HepG2 (cell line): ENCODE measurements at regions of chr6 and their contacts with region 1.

Region 1: DNA sequence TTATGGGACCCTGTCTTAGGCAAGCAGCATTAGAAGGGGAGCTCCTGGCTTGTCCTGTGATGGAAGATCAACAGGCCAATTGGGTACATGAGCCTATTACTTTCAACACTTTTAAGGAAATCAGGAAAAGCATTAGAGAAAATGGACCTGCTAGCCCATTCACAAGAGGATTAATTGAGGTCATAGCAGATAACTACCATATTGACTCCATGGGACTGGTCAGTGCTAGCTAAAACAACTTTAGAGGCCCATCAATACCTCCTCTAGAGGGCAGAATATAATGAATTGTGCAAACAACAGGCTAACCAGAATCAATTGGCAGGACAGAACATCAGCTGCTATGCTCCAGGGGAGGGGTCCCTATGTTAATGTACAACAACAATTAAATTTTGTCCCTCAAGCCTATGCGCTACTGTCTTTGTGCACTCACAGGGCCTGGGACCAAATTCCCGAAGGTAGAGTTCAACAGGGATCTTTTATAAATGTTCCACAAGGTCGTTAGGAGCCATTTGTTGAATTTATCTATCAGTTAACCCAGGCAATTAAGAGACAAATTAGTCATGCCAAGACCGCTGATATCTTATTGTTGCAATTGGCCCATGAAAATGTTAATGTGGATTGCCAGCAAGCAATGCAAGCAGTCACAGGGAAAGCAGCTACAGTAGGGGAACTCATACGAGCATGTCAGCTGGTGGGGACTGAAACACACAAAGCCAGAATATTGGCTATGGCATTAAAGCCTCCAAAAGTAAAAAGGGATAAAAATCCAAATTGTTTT is 106.6 kb upstream of the BTN3A2 start:
- DNase-seq: peak; percentile 47
- ATAC-seq: peak; percentile 55
- H3K4me3 ChIP-seq: peak overlapping the region; percentile 26 to 54 (median 43); a peak in 4 of 6 replicates
- H3K27ac ChIP-seq: peak overlapping the region; percentile 46
- H3K4me1 ChIP-seq: peaks cover 69% of the 10 kb centered on the region
- H3K27me3 ChIP-seq: no peaks in the 10 kb centered on the region
- CTCF ChIP-seq: peak; percentile 59
- EP300 ChIP-seq: no peak
- POLR2A ChIP-seq: no peak
- RAD21 ChIP-seq: no peak

Region 2: DNA sequence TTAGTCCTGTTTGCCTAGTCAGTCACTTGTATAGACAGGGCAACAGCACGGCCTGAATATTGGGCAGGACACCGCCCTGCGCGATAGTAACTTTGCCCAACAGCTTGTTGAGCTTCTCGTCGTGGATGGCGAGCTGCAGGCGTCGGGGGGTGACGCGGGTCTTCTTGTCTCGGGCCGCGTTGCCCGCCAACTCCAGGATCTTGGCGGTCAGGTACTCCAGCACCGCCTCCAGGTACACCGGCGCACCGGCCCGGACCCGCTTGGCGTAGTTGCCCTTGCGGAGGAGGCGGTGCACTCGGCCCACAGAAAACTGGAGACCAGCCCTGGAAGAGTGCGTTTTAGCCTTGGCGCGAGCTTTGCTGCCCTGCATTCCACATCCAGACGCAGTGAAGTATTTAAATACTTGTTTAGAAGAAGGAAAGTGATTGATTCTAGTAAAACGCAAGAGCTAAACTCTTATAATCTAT is 13.8 kb after region 1 on chr6:
- CTCF ChIA-PET with region 1: no interaction called
- POLR2A ChIA-PET with region 1: interaction called, 22 read pairs
- in situ Hi-C with region 1: no loop called
- intact Hi-C with region 1: no loop called
- DNase-seq: no peak
- ATAC-seq: peak; percentile 81
- H3K4me3 ChIP-seq: peak overlapping the region; percentile 54 to 73 (median 63)
- H3K27ac ChIP-seq: no peak overlapping the region
- H3K4me1 ChIP-seq: peaks cover 47% of the 10 kb centered on the region
- H3K27me3 ChIP-seq: peaks cover 4 to 24% of the 10 kb centered on the region in 2 experiments; a peak in 2 of 5 replicates
- CTCF ChIP-seq: peak; percentile 54
- EP300 ChIP-seq: no peak
- POLR2A ChIP-seq: no peak
- RAD21 ChIP-seq: no peak

Region 3: GRCh38 chr6:26285143-26286134 is 27.1 kb after region 1 on chr6:
- CTCF ChIA-PET with region 1: no interaction called
- POLR2A ChIA-PET with region 1: interaction called, 3 read pairs
- in situ Hi-C with region 1: no loop called
- intact Hi-C with region 1: loop called (anchors 2 kb)
- DNase-seq: peak; percentile 93
- ATAC-seq: peak; percentile 84
- H3K4me3 ChIP-seq: peak overlapping the region; percentile 76 to 89 (median 82)
- H3K27ac ChIP-seq: peak overlapping the region; percentile 85
- H3K4me1 ChIP-seq: peaks cover 19% of the 10 kb centered on the region
- H3K27me3 ChIP-seq: no peaks in the 10 kb centered on the region; a peak in 1 of 5 replicates
- CTCF ChIP-seq: peak; percentile 14; the same call in 1 of the 2 replicates
- EP300 ChIP-seq: peak; percentile 37 to 85; a peak in 3 of 4 replicates
- POLR2A ChIP-seq: peak; percentile 92 to 95
- RAD21 ChIP-seq: 0 out of 2 replicates have a peak, but pooled peaks have one; percentile 19

Region 4: GRCh38 chr6:26322645-26323482 is 64.5 kb after region 1 on chr6:
- CTCF ChIA-PET with region 1: no interaction called
- POLR2A ChIA-PET with region 1: no interaction called
- in situ Hi-C with region 1: no loop called
- intact Hi-C with region 1: loop called (anchors 5 kb)
- DNase-seq: peak; percentile 93
- ATAC-seq: peak; percentile 64
- H3K4me3 ChIP-seq: peak overlapping the region; percentile 61 to 89 (median 78)
- H3K27ac ChIP-seq: peak overlapping the region; percentile 76
- H3K4me1 ChIP-seq: peaks cover 65% of the 10 kb centered on the region
- H3K27me3 ChIP-seq: no peaks in the 10 kb centered on the region; a peak in 1 of 5 replicates
- CTCF ChIP-seq: no peak
- EP300 ChIP-seq: no peak
- POLR2A ChIP-seq: no peak
- RAD21 ChIP-seq: no peak